Endothelial cell of umbilical vein (primary cell): ENCODE measurements at regions of chr6 and their contacts with region 1.

Region 1: DNA sequence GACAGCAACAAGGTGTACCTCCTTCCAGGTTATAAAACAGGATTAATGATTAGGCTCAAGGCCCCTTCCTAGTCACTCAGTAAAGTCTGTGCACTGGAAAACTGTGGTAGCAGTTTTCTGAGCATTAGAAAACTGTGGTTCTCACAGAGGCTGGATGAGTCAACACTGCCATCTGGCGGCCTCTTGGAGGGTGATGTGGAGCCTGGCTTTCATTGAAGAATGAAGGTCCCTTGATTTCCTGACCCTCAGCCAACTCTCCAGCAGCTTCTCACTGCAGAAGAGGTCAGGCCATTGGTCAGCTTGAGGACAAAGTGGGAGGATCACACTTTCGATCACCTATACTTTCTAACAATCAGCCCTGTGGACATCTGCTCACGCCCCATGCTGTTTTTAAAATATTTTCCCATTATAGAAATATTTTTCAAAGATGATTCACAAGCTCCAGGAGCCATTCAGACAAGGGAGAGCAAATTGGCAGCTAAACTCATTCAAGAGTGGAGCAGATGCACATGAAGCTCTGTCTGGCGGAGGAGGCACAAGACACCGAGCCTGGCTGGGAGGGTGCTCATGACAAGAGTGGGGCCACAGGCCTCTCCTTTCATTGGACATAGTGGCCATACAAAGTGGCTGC is 23.2 kb downstream of the PSMB1 start:
- DNase-seq: peak; percentile 67
- H3K4me3 ChIP-seq: no peak overlapping the region
- H3K27ac ChIP-seq: no peak overlapping the region
- H3K4me1 ChIP-seq: no peaks in the 10 kb centered on the region
- H3K27me3 ChIP-seq: no peaks in the 10 kb centered on the region
- CTCF ChIP-seq: peak; percentile 87 to 90
- POLR2A ChIP-seq: no peak

Region 2: GRCh38 chr6:168895102-168895812 is 1634.7 kb before region 1 on chr6:
- CTCF ChIA-PET with region 1: interaction called, 12 read pairs
- POLR2A ChIA-PET with region 1: no interaction called
- dilution Hi-C with region 1: no loop called
- intact Hi-C with region 1: loop called (anchors 1 kb)
- DNase-seq: peak; percentile 44
- H3K4me3 ChIP-seq: no peak overlapping the region
- H3K27ac ChIP-seq: no peak overlapping the region
- H3K4me1 ChIP-seq: no peaks in the 10 kb centered on the region
- H3K27me3 ChIP-seq: no peaks in the 10 kb centered on the region
- CTCF ChIP-seq: peak; percentile 88
- POLR2A ChIP-seq: no peak